ENCODE measurements at regions of chr6 and their contacts with region 1.

Region 1: GRCh38 chr6:28136585-28137504 is 4.8 kb upstream of the ZKSCAN8 start:
- DNase-seq: peak; percentile 94
- ATAC-seq: peak; percentile 93

Region 2: DNA sequence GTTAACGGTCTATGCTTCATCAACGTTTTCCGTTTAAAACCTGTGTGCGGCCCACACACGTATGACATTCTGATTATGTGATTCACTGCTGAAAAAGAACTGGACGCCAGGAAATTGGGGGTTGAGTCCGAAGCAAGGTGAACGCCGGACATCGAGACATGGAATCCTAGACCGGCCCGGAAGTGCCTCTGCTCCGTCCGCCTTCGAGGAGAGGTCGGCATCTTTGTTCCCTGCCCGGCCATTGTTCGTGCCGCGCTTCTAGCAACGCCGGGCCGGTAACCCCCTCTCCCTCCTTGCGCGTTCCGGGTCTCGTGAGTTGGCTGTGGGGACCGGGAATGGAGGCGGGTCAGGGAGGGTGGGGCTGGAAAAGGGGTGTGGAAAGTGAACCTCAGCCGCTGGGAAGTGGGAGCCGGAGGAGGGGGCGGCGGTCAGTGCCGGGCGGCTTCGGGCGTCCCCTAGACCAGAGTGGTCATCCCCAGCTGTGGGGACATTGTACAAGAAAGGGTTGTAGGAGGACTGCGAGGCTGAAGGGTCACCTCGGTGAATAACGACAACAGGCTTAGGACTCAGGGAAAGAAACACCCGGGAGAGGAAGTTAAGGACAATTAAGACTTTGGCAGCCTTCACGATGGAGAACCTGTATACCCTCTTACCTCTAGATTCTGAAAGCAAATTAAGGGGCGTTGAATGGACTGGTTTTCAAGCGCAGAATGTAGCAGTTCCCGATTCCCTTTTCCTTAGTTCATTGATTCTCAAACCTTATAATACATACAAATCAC is 88.4 kb after region 1 on chr6 and contains the start of gene ZSCAN9:
- intact Hi-C with region 1: loop called (anchors 10 kb)
- DNase-seq: peak; percentile 85
- ATAC-seq: peak; percentile 99
- total RNA-seq, gene ZSCAN9: 10.2 TPM

Region 3: GRCh38 chr6:28355743-28356665 is 219.2 kb after region 1 on chr6:
- intact Hi-C with region 1: loop called (anchors 10 kb)
- DNase-seq: peak; percentile 77
- ATAC-seq: peak; percentile 93

Measured in left ventricle myocardium superior (tissue), 1 donor.